Activated T-helper 1 cell treated with anti-CD3 and anti-CD28 coated beads, Interleukin-12 subunit alpha, Interleukin-12 subunit beta, Interleukin-2, Interleukin-4 antibody, amounts not matched to agents 30 ng/mL and 10 ng/mL and 1 ng/mL, durations not matched to agents 14 hours and 24 hours and 36 hours (primary cell): ENCODE measurements at regions of chr2 and their contacts with region 1.

Region 1: GRCh38 chr2:85538486-85539360 is at the start of gene MAT2A:
- DNase-seq: peak; percentile 88
- H3K4me3 Mint-ChIP-seq: peak within 1 kb of the TSS; percentile 99
- H3K27ac Mint-ChIP-seq: peak within 1 kb of the TSS; percentile 97
- H3K4me1 Mint-ChIP-seq: peaks cover 56% of the 10 kb centered on the region
- H3K27me3 Mint-ChIP-seq: no peaks in the 10 kb centered on the region
- total RNA-seq, gene MAT2A: 461 and 480 TPM in 2 replicates

Region 2: DNA sequence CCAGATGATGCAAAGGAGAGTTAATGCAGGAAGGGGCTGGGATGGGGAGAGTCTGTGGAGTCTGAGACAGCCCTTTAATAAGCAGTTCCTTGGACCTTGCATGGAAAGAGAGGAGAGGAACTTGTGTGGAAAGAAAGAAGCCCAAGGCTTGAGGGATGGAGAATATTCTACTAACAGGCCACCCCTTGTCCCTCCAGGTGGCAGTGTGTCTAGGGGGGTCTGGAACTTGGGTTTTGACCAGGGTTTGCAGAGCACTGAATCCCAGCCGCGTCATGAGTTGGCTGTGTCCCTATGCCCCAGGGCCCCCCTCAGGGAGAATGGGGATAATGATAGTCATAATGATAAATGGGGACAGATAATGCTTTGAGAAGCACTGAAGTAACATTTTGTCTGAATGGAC is 390.5 kb before region 1 on chr2:
- intact Hi-C with region 1: no loop called
- DNase-seq: no peak
- H3K4me3 Mint-ChIP-seq: no peak overlapping the region
- H3K27ac Mint-ChIP-seq: no peak overlapping the region
- H3K4me1 Mint-ChIP-seq: no peaks in the 10 kb centered on the region
- H3K27me3 Mint-ChIP-seq: peaks cover 8% of the 10 kb centered on the region

Region 3: GRCh38 chr2:85327822-85328617 is 210.7 kb before region 1 on chr2 and contains the start of gene TGOLN2:
- intact Hi-C with region 1: loop called (anchors 1 kb)
- DNase-seq: peak; percentile 92
- H3K4me3 Mint-ChIP-seq: peak within 1 kb of the TSS; percentile 95
- H3K27ac Mint-ChIP-seq: peak within 1 kb of the TSS; percentile 99
- H3K4me1 Mint-ChIP-seq: peaks cover 34% of the 10 kb centered on the region
- H3K27me3 Mint-ChIP-seq: no peaks in the 10 kb centered on the region
- total RNA-seq, gene TGOLN2: 102 and 104 TPM in 2 replicates

Region 4: GRCh38 chr2:85369500-85369899 is 169.2 kb before region 1 on chr2:
- intact Hi-C with region 1: no loop called
- DNase-seq: no peak
- H3K4me3 Mint-ChIP-seq: no peak overlapping the region
- H3K27ac Mint-ChIP-seq: no peak overlapping the region
- H3K4me1 Mint-ChIP-seq: no peaks in the 10 kb centered on the region
- H3K27me3 Mint-ChIP-seq: no peaks in the 10 kb centered on the region

Region 5: GRCh38 chr2:85551698-85552678 is 13.3 kb after region 1 on chr2:
- intact Hi-C with region 1: loop called (anchors 1 kb)
- DNase-seq: peak; percentile 80
- H3K4me3 Mint-ChIP-seq: no peak overlapping the region
- H3K27ac Mint-ChIP-seq: no peak overlapping the region
- H3K4me1 Mint-ChIP-seq: peaks cover 8% of the 10 kb centered on the region
- H3K27me3 Mint-ChIP-seq: no peaks in the 10 kb centered on the region

Region 6: GRCh38 chr2:85584857-85585783 is 46.4 kb after region 1 on chr2:
- intact Hi-C with region 1: loop called (anchors 2 kb)
- DNase-seq: no peak
- H3K4me3 Mint-ChIP-seq: peak overlapping the region; percentile 88
- H3K27ac Mint-ChIP-seq: peak overlapping the region; percentile 94
- H3K4me1 Mint-ChIP-seq: peaks cover 43% of the 10 kb centered on the region
- H3K27me3 Mint-ChIP-seq: no peaks in the 10 kb centered on the region

Region 7: GRCh38 chr2:85611705-85612587 is 73.2 kb after region 1 on chr2 and contains the start of gene C2orf68:
- intact Hi-C with region 1: loop called (anchors 2 kb)
- DNase-seq: peak; percentile 86
- H3K4me3 Mint-ChIP-seq: peak within 1 kb of the TSS; percentile 98
- H3K27ac Mint-ChIP-seq: peak within 1 kb of the TSS; percentile 89
- H3K4me1 Mint-ChIP-seq: peaks cover 12% of the 10 kb centered on the region
- H3K27me3 Mint-ChIP-seq: no peaks in the 10 kb centered on the region
- total RNA-seq, gene C2orf68: 36.3 and 36.7 TPM in 2 replicates

Region 8: GRCh38 chr2:86037141-86037794 is 498.5 kb after region 1 on chr2:
- intact Hi-C with region 1: no loop called
- DNase-seq: no peak
- H3K4me3 Mint-ChIP-seq: peak overlapping the region; percentile 76
- H3K27ac Mint-ChIP-seq: peak overlapping the region; percentile 93
- H3K4me1 Mint-ChIP-seq: peaks cover 75% of the 10 kb centered on the region
- H3K27me3 Mint-ChIP-seq: no peaks in the 10 kb centered on the region